Mammary epithelial cell (primary cell): ENCODE measurements at regions of chr3 and their contacts with region 1.

Region 1: DNA sequence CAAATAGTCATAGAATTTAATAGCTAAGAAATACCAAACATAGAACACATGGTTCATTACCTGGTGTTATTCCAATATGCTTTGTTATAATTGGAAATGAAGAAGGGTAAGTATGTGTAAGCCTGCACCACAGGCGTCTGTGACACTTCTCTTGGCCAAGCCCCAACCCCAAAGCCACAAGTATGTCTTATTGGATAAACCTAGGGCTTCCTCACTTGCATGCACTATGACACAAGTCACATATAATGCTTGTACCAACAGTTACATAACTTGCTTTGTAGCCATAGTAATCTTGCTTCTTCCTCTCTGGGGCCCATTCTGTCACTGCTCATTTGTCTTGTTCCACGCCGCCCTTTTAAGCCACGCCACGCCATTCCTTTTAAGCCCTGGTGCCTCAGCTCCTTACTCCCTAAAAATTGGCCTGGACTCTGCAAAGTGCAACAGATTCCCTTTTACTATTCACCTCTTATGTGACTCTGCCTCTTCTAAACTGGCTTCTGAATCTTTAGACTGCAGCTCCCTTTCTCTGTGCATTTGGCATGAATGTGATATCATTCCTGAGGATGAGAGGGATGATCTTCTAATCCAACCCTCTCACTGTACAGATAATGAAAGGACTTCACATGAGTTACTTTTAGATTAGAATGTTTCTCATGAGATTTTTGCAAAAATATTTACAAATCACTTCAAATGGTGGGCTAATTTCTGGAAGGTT is 48.1 kb upstream of the EPHA3 start:
- DNase-seq: peak; percentile 67
- H3K4me3 ChIP-seq: no peak overlapping the region
- H3K27ac ChIP-seq: no peak overlapping the region
- H3K4me1 ChIP-seq: peaks cover 6% of the 10 kb centered on the region
- H3K27me3 ChIP-seq: peaks cover 2% of the 10 kb centered on the region
- CTCF ChIP-seq: no peak

Region 2: DNA sequence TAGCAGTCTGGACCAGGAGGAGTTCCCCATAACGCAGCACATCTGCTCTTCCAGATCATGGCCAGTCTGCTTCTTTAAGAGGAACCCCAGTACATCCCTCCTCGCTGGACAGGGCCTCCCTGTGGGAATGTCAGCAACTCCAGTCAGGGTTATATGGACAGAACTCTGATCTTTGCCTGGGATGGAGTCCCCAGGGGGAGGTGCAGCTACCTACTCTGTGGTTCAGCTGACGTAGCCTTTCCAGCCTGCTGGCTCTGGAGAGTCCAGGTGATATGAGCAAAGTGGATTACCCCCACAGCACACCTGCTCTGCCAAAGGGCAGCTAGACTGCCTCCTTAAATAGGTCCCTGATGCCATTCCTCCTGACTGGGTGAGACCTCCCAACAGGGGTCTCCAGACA is 369.1 kb before region 1 on chr3:
- CTCF ChIA-PET with region 1: no interaction called
- dilution Hi-C with region 1: no loop called
- in situ Hi-C with region 1: no loop called
- intact Hi-C with region 1: no loop called
- DNase-seq: no peak
- H3K4me3 ChIP-seq: no peak overlapping the region
- H3K27ac ChIP-seq: no peak overlapping the region
- H3K4me1 ChIP-seq: no peaks in the 10 kb centered on the region
- H3K27me3 ChIP-seq: no peaks in the 10 kb centered on the region
- CTCF ChIP-seq: no peak

Region 3: DNA sequence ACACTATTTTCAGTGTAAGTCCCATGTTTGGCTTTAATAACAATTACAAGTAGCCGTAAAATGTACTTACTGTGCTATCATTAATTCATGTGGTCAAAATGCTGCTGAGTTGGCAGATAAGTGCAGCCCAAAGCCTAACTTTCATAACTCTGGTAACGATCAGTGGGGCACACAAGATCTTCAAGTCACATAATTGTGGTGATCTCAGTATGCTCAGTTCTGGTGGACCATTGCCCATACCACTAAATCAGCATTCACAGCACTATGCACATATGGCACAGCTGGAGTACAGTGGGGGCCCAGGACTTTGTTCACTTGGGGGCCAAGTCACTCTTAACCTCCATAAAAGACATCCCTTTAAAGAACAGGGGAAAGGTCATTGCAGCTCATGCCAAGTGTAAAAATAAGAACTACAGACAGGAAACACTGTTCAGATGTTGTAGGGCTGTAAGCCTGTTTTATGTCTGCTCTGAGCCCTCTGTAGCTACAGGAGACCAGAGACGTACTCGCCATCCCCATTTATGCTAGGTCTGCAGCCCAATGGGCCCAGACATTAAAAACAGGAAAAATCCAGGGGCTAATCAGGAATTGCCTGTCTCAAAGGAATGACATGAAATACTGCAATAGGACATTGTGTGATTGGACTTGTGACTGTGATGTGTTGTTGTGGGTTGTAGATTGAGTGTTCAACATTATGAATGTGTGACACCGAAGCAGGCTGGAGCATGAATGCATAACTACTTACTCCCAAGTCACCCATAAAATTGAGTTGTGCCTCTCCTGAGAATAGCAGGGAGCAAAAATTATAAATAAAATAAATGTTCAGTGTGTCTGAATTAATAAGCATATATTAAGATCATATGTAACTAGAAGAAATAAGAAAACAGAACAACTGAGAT is 234.5 kb before region 1 on chr3:
- CTCF ChIA-PET with region 1: no interaction called
- dilution Hi-C with region 1: no loop called
- in situ Hi-C with region 1: no loop called
- intact Hi-C with region 1: no loop called
- DNase-seq: no peak
- H3K4me3 ChIP-seq: no peak overlapping the region
- H3K27ac ChIP-seq: no peak overlapping the region
- H3K4me1 ChIP-seq: no peaks in the 10 kb centered on the region
- H3K27me3 ChIP-seq: no peaks in the 10 kb centered on the region
- CTCF ChIP-seq: no peak

Region 4: GRCh38 chr3:89032346-89033013 is 26.9 kb before region 1 on chr3:
- CTCF ChIA-PET with region 1: interaction called, 15 read pairs
- dilution Hi-C with region 1: no loop called
- in situ Hi-C with region 1: no loop called
- intact Hi-C with region 1: no loop called
- DNase-seq: peak; percentile 31
- H3K4me3 ChIP-seq: no peak overlapping the region
- H3K27ac ChIP-seq: no peak overlapping the region
- H3K4me1 ChIP-seq: no peaks in the 10 kb centered on the region
- H3K27me3 ChIP-seq: no peaks in the 10 kb centered on the region
- CTCF ChIP-seq: no peak

Region 5: GRCh38 chr3:89145995-89146394 is 86.6 kb after region 1 on chr3:
- CTCF ChIA-PET with region 1: no interaction called
- dilution Hi-C with region 1: no loop called
- in situ Hi-C with region 1: no loop called
- intact Hi-C with region 1: no loop called
- DNase-seq: peak; percentile 77
- H3K4me3 ChIP-seq: no peak overlapping the region
- H3K27ac ChIP-seq: no peak overlapping the region
- H3K4me1 ChIP-seq: no peaks in the 10 kb centered on the region
- H3K27me3 ChIP-seq: no peaks in the 10 kb centered on the region
- CTCF ChIP-seq: no peak

Region 6: GRCh38 chr3:89252866-89253265 is 193.5 kb after region 1 on chr3:
- CTCF ChIA-PET with region 1: no interaction called
- dilution Hi-C with region 1: no loop called
- in situ Hi-C with region 1: no loop called
- intact Hi-C with region 1: no loop called
- DNase-seq: no peak
- H3K4me3 ChIP-seq: no peak overlapping the region
- H3K27ac ChIP-seq: no peak overlapping the region
- H3K4me1 ChIP-seq: no peaks in the 10 kb centered on the region
- H3K27me3 ChIP-seq: no peaks in the 10 kb centered on the region
- CTCF ChIP-seq: no peak